ENCODE measurements at regions of chr20 and their contacts with region 1.

Region 1: DNA sequence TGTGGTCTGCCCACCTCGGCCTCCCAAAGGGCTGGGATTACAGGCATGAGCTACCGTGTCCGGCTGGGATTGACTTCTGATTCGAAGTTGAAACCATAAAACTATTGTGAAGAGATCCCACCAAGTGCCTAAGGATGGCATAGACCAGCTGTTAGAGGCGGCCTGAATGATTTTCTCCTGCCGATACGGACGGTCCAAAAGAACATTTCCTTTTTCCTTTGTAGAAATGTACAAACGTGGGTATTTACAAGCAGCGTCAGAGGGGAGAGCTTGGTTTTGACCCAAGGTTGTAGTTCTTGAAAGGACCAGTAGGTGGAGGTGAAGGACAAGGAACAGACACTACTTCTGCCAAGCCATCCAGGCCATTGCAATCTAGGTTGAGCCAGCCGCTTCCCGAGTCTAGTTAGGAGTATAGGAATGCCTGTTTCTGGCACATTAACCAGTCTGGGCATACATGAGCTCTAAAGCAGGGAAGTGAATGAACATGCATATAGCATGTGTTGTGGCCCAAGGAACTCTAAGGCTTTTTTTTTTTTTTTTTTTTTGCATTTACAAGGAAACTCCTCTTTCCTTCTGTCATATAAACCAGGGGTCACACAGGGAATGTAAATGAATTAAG is 29.1 kb downstream of the MOCS3 start:
- DNase-seq: peak; percentile 81
- H3K4me3 ChIP-seq: no peak overlapping the region
- H3K27ac ChIP-seq: no peak overlapping the region
- H3K27me3 ChIP-seq: no peaks in the 10 kb centered on the region
- CTCF ChIP-seq: peak; percentile 92

Region 2: GRCh38 chr20:50790651-50791277 is 196.9 kb before region 1 on chr20:
- CTCF ChIA-PET with region 1: interaction called, 28 read pairs
- POLR2A ChIA-PET with region 1: no interaction called
- DNase-seq: peak; percentile 76
- H3K4me3 ChIP-seq: no peak overlapping the region
- H3K27ac ChIP-seq: peak overlapping the region; percentile 75
- H3K27me3 ChIP-seq: no peaks in the 10 kb centered on the region
- CTCF ChIP-seq: peak; percentile 84

Region 3: GRCh38 chr20:50929299-50930138 is 58.2 kb before region 1 on chr20:
- CTCF ChIA-PET with region 1: no interaction called
- POLR2A ChIA-PET with region 1: no interaction called
- DNase-seq: peak; percentile 92
- H3K4me3 ChIP-seq: peak overlapping the region; percentile 86
- H3K27ac ChIP-seq: peak overlapping the region; percentile 13
- H3K27me3 ChIP-seq: no peaks in the 10 kb centered on the region
- CTCF ChIP-seq: peak; percentile 99

Region 4: GRCh38 chr20:51306503-51307358 is 319.0 kb after region 1 on chr20:
- CTCF ChIA-PET with region 1: interaction called, 295 read pairs
- POLR2A ChIA-PET with region 1: interaction called, 9 read pairs
- DNase-seq: peak; percentile 34
- H3K4me3 ChIP-seq: no peak overlapping the region
- H3K27ac ChIP-seq: no peak overlapping the region
- H3K27me3 ChIP-seq: no peaks in the 10 kb centered on the region
- CTCF ChIP-seq: peak; percentile 87

Region 5: GRCh38 chr20:51335329-51335841 is 347.7 kb after region 1 on chr20:
- CTCF ChIA-PET with region 1: interaction called, 12 read pairs
- POLR2A ChIA-PET with region 1: no interaction called
- DNase-seq: peak; percentile 98
- H3K4me3 ChIP-seq: no peak overlapping the region
- H3K27ac ChIP-seq: peak overlapping the region; percentile 99
- H3K27me3 ChIP-seq: no peaks in the 10 kb centered on the region
- CTCF ChIP-seq: peak; percentile 19; the same call in 1 of the 2 replicates

Region 6: GRCh38 chr20:51360451-51361221 is 372.9 kb after region 1 on chr20:
- CTCF ChIA-PET with region 1: interaction called, 23 read pairs
- POLR2A ChIA-PET with region 1: no interaction called
- DNase-seq: peak; percentile 96
- H3K4me3 ChIP-seq: no peak overlapping the region
- H3K27ac ChIP-seq: peak overlapping the region; percentile 82
- H3K27me3 ChIP-seq: no peaks in the 10 kb centered on the region
- CTCF ChIP-seq: no peak

Region 7: GRCh38 chr20:51372176-51372803 is 384.6 kb after region 1 on chr20:
- CTCF ChIA-PET with region 1: interaction called, 22 read pairs
- POLR2A ChIA-PET with region 1: no interaction called
- DNase-seq: no peak
- H3K4me3 ChIP-seq: no peak overlapping the region
- H3K27ac ChIP-seq: no peak overlapping the region
- H3K27me3 ChIP-seq: no peaks in the 10 kb centered on the region
- CTCF ChIP-seq: peak; percentile 96

Region 8: GRCh38 chr20:51624157-51624731 is 636.5 kb after region 1 on chr20:
- CTCF ChIA-PET with region 1: interaction called, 37 read pairs
- POLR2A ChIA-PET with region 1: no interaction called
- DNase-seq: no peak
- H3K4me3 ChIP-seq: no peak overlapping the region
- H3K27ac ChIP-seq: peak overlapping the region; percentile 31
- H3K27me3 ChIP-seq: no peaks in the 10 kb centered on the region
- CTCF ChIP-seq: peak; percentile 71

Measured in AG04450 (cell line).